Psoas muscle (tissue), 8 donors: ENCODE measurements at regions of chr2 and their contacts with region 1.

Region 1: DNA sequence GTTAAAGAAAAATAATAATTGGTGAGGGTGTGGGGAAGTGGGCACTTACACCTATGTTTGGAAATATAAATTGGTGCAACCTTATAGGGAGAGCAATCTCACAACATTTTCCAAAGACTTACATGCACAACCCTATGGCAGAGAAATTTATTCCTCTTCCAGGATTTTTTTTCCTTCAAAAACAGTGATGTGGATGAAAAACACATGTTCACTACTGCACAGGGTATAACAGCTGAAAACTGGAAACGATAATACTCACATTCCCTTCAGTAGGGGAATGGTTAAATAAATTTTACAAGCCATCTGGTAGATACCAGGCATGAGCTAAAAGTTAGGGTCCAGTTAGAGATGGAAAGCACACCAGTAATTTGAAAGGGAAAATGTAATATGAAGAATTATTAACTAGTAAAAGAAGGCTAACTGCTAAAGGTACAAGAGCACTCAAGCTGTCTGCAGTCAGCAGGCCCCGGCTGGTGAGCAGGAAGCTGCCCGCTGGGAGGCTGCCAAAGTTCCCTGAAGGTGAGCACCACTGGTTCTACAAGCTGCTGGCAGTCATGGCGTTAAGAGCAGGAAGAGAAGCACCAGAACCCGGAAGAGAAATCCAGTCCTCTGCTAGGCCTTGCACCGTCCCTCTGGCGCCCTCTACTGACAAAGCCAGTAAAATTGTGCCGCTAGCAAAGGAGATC is 28.4 kb upstream of the CASP8 start:
- DNase-seq: peak; percentile 74 to 82
- ATAC-seq: peak; percentile 40 to 86 (median 77)
- H3K4me3 ChIP-seq: no peak overlapping the region
- H3K27ac ChIP-seq: no peak overlapping the region
- H3K4me1 ChIP-seq: peaks cover 3% of the 10 kb centered on the region
- H3K27me3 ChIP-seq: no peaks in the 10 kb centered on the region
- CTCF ChIP-seq: peak; percentile 62

Region 2: GRCh38 chr2:201182650-201183364 is 49.1 kb before region 1 on chr2 and contains the start of gene CASP10:
- intact Hi-C with region 1: loop called in 1 of 2 experiments (anchors 5 kb)
- DNase-seq: no peak
- ATAC-seq: no peak
- H3K4me3 ChIP-seq: peak within 1 kb of the TSS; percentile 62
- H3K27ac ChIP-seq: peak within 1 kb of the TSS; percentile 50
- H3K4me1 ChIP-seq: no peaks in the 10 kb centered on the region
- H3K27me3 ChIP-seq: no peaks in the 10 kb centered on the region
- CTCF ChIP-seq: no peak
- total RNA-seq, gene CASP10: 2.3 to 3.8 (median 2.8) TPM

Region 3: GRCh38 chr2:201363857-201364560 is 132.1 kb after region 1 on chr2:
- intact Hi-C with region 1: loop called in 1 of 2 experiments (anchors 5 kb)
- DNase-seq: no peak
- ATAC-seq: peak; percentile 61 to 75 (median 69)
- H3K4me3 ChIP-seq: no peak overlapping the region
- H3K27ac ChIP-seq: no peak overlapping the region
- H3K4me1 ChIP-seq: no peaks in the 10 kb centered on the region
- H3K27me3 ChIP-seq: no peaks in the 10 kb centered on the region
- CTCF ChIP-seq: peak; percentile 63